Endothelial cell of umbilical vein (primary cell): ENCODE measurements at regions of chr1 and their contacts with region 1.

Region 1: DNA sequence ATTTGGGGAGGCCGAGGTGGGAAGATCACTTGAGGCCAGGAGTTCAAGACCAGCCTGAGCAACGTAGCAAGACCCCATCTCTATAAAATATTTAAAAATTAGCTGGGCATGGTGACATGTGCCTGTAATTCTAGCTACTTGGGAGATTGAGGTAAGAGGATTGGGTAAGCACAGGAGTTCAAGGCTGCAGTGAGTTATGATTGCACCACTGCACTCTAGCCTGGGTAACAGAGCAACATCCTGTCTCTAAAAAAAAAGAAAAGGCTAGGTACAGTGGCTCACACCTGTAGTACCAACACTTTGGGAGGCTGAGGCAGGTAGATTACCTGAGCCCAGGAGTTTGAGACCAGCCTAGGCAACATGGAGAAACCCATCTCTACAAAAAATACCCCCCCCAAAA is 35.7 kb upstream of the RCC1 start:
- DNase-seq: no peak
- H3K4me3 ChIP-seq: no peak overlapping the region
- H3K27ac ChIP-seq: no peak overlapping the region
- H3K4me1 ChIP-seq: no peaks in the 10 kb centered on the region
- H3K27me3 ChIP-seq: no peaks in the 10 kb centered on the region
- CTCF ChIP-seq: no peak
- POLR2A ChIP-seq: no peak

Region 2: DNA sequence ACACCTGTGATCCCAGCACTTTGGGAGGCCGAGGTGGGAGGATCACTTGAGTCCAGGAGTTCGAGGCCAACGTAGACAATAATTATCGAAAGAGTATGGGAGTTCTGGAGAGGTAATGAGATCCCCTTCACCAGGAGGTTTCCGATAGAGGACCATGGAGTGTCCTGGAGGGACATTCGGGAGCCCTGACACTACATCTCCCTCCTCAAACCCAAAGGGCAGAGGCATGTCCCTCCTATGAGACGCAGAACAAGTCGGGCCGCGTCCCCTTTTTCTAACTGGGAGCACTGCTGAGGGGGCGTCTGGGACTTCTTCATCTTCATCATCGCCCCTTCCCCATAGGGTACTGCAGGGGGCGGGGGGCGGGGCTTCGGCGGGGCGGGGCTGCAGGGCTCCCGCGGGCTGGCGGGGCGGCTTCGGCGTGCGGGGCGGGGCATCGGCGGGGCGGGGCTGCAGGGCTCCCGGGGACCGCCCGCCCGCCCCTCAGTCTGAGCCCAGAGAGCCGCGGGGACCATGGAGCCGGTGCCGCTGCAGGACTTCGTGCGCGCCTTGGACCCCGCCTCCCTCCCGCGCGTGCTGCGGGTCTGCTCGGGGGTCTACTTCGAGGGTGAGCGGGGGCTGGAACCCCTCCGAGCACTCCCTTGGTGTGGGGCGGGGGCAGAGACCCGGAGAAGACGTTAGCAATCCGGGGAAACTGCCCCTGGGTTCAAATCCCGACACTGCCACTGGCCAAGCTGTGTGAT is 597.9 kb before region 1 on chr1 and contains the start of gene THEMIS2:
- CTCF ChIA-PET with region 1: no interaction called
- POLR2A ChIA-PET with region 1: no interaction called
- dilution Hi-C with region 1: no loop called
- intact Hi-C with region 1: loop called (anchors 5 kb)
- DNase-seq: peak; percentile 52
- H3K4me3 ChIP-seq: peak within 1 kb of the TSS; percentile 59 to 78 (median 77)
- H3K27ac ChIP-seq: no peak within 1 kb of the TSS
- H3K4me1 ChIP-seq: peaks cover 9% of the 10 kb centered on the region
- H3K27me3 ChIP-seq: no peaks in the 10 kb centered on the region
- CTCF ChIP-seq: no peak
- POLR2A ChIP-seq: peak; percentile 33
- total RNA-seq, gene THEMIS2: 6.3 and 11.1 TPM in 2 replicates

Region 3: DNA sequence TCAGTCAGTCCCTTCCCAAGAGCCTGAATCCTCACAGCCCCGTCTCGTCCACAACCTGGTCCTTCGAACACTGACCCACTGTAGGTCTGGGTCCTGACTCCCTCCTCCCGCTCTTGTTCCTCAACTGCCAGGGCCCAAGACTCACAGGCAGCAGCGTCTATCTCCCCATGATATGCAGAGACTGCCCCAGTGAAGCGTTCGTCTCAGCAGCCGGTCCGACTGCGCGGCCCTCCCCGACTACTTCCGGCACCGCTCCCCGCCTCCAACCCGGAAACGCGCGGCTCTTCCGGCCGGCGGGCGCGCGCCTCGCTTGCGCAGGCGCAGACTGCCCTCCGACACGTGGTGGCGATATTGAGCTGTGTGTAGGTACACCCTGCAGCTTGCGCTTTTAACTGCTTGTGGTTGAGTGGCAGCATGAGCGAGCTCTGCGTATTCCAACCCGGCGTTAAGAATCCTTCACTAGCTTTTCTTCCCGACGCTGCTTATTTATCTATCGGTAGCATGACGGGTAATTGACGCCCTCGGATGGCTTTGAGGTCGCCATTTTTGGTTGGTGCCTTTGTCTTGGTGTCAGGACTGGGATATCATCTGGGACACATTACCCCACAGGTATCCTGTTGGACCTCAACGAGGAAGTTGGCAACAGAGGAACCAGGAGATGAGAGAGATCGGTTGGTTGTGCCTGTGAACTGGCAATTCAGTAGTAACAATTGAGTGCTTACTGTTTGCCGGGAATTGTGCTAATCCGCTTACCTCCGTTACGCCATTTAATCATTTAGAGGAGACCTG is 172.9 kb after region 1 on chr1 and contains the start of gene TAF12:
- CTCF ChIA-PET with region 1: no interaction called
- POLR2A ChIA-PET with region 1: no interaction called
- dilution Hi-C with region 1: no loop called
- intact Hi-C with region 1: no loop called
- DNase-seq: peak; percentile 98
- H3K4me3 ChIP-seq: peak within 1 kb of the TSS; percentile 70 to 89 (median 82)
- H3K27ac ChIP-seq: peak within 1 kb of the TSS; percentile 91
- H3K4me1 ChIP-seq: peaks cover 20% of the 10 kb centered on the region
- H3K27me3 ChIP-seq: no peaks in the 10 kb centered on the region
- CTCF ChIP-seq: peak in 1 of 2 donors; percentile 48
- POLR2A ChIP-seq: peak; percentile 100
- total RNA-seq, gene TAF12: 15.3 and 18.2 TPM in 2 replicates